ENCODE measurements at regions of chr22 and their contacts with region 1.

Region 1: GRCh38 chr22:49632199-49633009 is 195.3 kb downstream of the BRD1 start:
- DNase-seq: peak; percentile 55 to 67
- ATAC-seq: peak; percentile 84 to 91
- H3K4me3 ChIP-seq: peak overlapping the region; percentile 42
- H3K27ac ChIP-seq: peak overlapping the region; percentile 34 to 67; a peak in 4 of 6 replicates
- H3K4me1 ChIP-seq: no peaks in the 10 kb centered on the region
- CTCF ChIP-seq: peak; percentile 80
- EP300 ChIP-seq: no peak
- POLR2A ChIP-seq: no peak
- RAD21 ChIP-seq: peak; percentile 88

Region 2: GRCh38 chr22:48574776-48575565 is 1057.4 kb before region 1 on chr22:
- CTCF ChIA-PET with region 1: interaction called, 15 read pairs
- POLR2A ChIA-PET with region 1: no interaction called
- DNase-seq: peak; percentile 67 to 79
- ATAC-seq: peak; percentile 83 to 94
- H3K4me3 ChIP-seq: peak overlapping the region; percentile 52
- H3K27ac ChIP-seq: peak overlapping the region; percentile 64 to 91; a peak in 5 of 6 replicates
- H3K4me1 ChIP-seq: 0 out of 3 replicates have a peak, but pooled peaks cover 4% of the 10 kb centered on the region
- CTCF ChIP-seq: peak; percentile 81
- EP300 ChIP-seq: no peak
- POLR2A ChIP-seq: peak; percentile 32; the same call in 1 of the 2 replicates
- RAD21 ChIP-seq: peak; percentile 46 to 67

Region 3: DNA sequence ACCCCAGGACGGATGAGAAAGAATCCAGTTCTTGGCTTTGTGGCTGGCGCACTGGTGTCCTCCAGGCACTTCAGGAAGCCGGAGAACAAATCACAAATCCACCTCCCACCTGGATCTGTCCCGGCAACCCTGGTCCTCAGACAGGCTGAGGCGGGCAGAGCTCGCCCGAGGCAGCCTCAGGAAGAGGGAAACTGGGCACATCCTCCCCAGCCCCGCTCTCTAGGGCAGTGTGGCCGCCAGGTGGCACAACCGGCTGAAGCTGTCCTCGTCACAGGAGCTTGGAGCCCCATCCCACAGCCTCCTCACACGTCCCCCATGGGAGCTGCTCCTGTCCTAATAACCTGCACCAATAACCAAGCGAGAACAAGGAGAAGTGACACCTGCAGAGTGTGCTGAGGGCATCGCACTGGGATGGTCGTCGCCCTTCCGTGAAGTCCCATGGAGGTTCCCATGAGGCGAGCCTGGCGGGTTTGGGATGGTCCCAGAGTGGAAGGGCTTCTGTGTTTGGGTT is 198.2 kb before region 1 on chr22:
- CTCF ChIA-PET with region 1: interaction called, 38 read pairs
- POLR2A ChIA-PET with region 1: no interaction called
- DNase-seq: peak; percentile 27 to 28
- ATAC-seq: peak; percentile 86 to 96
- H3K4me3 ChIP-seq: no peak overlapping the region
- H3K27ac ChIP-seq: no peak overlapping the region
- H3K4me1 ChIP-seq: no peaks in the 10 kb centered on the region
- CTCF ChIP-seq: peak; percentile 40
- EP300 ChIP-seq: no peak
- POLR2A ChIP-seq: no peak
- RAD21 ChIP-seq: peak; percentile 52 to 53